ENCODE measurements at regions of chr18 and their contacts with region 1.

Region 1: DNA sequence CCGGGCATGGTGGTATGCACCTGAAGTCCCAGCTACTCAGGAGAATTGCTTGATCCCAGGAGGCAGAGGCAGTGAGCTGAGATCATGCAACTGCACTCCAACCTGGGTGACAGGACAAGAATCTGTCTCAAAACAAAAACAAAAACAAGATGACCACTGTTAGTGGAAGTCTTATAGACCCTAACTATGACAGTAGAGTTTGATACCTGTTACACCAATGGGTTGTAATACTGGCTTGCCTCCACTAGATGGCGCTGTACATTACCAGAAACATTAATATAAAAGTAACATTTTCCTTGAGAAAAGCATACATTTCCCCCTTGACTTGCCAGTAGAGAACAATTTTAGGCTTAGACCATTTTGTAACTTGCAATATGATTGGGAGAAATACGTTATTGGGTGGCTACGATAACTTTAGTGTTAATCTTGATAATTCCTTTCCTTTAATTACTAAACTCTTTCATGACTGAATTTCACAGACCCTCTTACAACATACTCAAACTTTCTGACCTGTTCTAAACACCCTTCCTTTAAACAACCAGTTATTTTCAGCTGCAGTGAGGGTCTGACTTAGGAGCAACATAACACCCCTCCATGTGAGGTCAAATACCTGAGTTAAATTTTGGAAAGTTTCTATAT is 19.5 kb downstream of the SLC25A52 start:
- DNase-seq: peak in 2 of 5 donors; percentile 36 to 46
- H3K4me3 ChIP-seq: no peak overlapping the region
- H3K27ac ChIP-seq: no peak overlapping the region
- H3K4me1 ChIP-seq: no peaks in the 10 kb centered on the region
- H3K27me3 ChIP-seq: no peaks in the 10 kb centered on the region
- CTCF ChIP-seq: peak; percentile 26 to 54 (median 52)
- EP300 ChIP-seq: no peak
- POLR2A ChIP-seq: no peak

Region 2: GRCh38 chr18:31977270-31977872 is 236.2 kb after region 1 on chr18:
- intact Hi-C with region 1: loop called in 1 of 4 experiments (anchors 10 kb)
- DNase-seq: peak in 2 of 5 donors; percentile 33 to 41
- H3K4me3 ChIP-seq: no peak overlapping the region
- H3K27ac ChIP-seq: no peak overlapping the region
- H3K4me1 ChIP-seq: no peaks in the 10 kb centered on the region
- H3K27me3 ChIP-seq: no peaks in the 10 kb centered on the region
- CTCF ChIP-seq: peak; percentile 27 to 40 (median 31)
- EP300 ChIP-seq: no peak
- POLR2A ChIP-seq: no peak

Region 3: GRCh38 chr18:32010124-32010738 is 269.0 kb after region 1 on chr18:
- intact Hi-C with region 1: no loop called
- DNase-seq: no peak
- H3K4me3 ChIP-seq: no peak overlapping the region
- H3K27ac ChIP-seq: no peak overlapping the region
- H3K4me1 ChIP-seq: no peaks in the 10 kb centered on the region
- H3K27me3 ChIP-seq: no peaks in the 10 kb centered on the region
- CTCF ChIP-seq: no peak
- EP300 ChIP-seq: no peak
- POLR2A ChIP-seq: no peak

Measured in ovary (tissue), 10 donors.